ENCODE measurements at regions of chr12 and their contacts with region 1.

Region 1: GRCh38 chr12:69511469-69512267 is 41.5 kb downstream of the FRS2 start:
- DNase-seq: no peak
- ATAC-seq: peak; percentile 91 to 94 (median 92)
- H3K4me3 ChIP-seq: no peak overlapping the region
- H3K27ac ChIP-seq: peak overlapping the region; percentile 24
- H3K4me1 ChIP-seq: peaks cover 53% of the 10 kb centered on the region
- H3K27me3 ChIP-seq: no peaks in the 10 kb centered on the region
- CTCF ChIP-seq: no peak

Region 2: GRCh38 chr12:69366796-69367195 is 144.9 kb before region 1 on chr12:
- intact Hi-C with region 1: no loop called
- DNase-seq: no peak
- ATAC-seq: no peak
- H3K4me3 ChIP-seq: no peak overlapping the region
- H3K27ac ChIP-seq: no peak overlapping the region
- H3K4me1 ChIP-seq: no peaks in the 10 kb centered on the region
- H3K27me3 ChIP-seq: no peaks in the 10 kb centered on the region
- CTCF ChIP-seq: no peak

Region 3: DNA sequence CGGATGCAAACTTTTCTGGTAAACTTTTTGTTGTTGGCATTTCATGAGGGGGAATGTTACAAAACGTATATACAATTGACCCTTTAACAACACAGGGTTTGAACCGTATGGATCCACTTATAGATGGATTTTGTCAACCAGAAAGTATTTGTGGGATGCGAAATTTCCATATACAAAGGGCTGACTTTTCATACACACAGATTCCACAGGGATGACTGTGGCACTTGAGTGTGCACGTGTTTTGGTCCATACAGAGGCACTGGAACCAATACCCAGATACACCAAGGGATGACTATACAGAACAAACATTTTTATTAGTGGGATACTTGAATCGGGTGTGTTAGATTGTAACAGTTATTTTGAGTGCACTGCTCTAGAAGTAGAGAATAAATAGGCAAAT is 43.8 kb after region 1 on chr12:
- intact Hi-C with region 1: loop called in 1 of 2 experiments (anchors 5 kb)
- DNase-seq: no peak
- ATAC-seq: no peak
- H3K4me3 ChIP-seq: no peak overlapping the region
- H3K27ac ChIP-seq: no peak overlapping the region
- H3K4me1 ChIP-seq: peaks cover 6% of the 10 kb centered on the region
- H3K27me3 ChIP-seq: no peaks in the 10 kb centered on the region
- CTCF ChIP-seq: no peak

Measured in psoas muscle (tissue), 8 donors.